Activated CD8-positive, alpha-beta T cell treated with anti-CD3 and anti-CD28 coated beads for 36 hours (primary cell): ENCODE measurements at regions of chr2 and their contacts with region 1.

Region 1: DNA sequence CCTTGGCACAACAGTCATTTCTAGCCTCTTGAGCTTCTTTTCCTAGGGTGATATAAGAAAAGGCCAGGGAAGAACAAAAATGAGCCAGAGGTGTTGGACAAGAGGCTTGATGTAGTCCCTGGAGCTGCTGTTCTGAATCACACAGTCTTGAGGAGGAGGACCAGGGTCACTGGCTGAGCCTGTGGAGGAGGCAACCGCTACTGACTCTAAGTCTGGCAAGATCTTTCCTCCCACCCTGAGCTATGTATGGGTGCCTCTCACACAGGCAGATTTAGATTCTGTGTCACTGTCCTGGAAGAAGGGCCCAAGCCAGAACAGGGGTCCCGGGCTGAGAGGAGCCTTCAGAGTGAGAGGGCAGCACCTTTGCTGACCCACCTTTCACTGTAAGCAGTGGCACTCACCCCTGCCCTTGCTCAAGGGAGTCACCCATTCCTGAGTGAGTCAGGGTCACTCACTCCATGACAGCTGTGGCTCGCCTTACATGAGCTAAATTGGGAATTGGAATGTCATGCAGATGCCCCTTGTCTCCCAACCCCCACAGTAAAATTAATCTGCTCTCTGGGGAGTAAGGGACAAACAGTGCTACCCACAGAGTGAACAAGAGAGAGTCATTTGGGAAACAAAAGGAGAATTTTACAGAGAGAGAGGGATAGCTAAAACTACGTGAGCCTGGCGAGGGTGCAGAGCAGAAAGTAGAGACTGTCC is at the start of gene TRIM54:
- DNase-seq: no peak
- ATAC-seq: no peak
- H3K4me3 Mint-ChIP-seq: no peak within 1 kb of the TSS
- H3K27ac Mint-ChIP-seq: no peak within 1 kb of the TSS
- H3K4me1 Mint-ChIP-seq: peaks cover 6% of the 10 kb centered on the region
- H3K27me3 Mint-ChIP-seq: peaks cover 8% of the 10 kb centered on the region
- CTCF ChIP-seq: no peak
- total RNA-seq, gene TRIM54: 0.16 to 0.23 TPM

Region 2: GRCh38 chr2:26846328-26847306 is 435.4 kb before region 1 on chr2:
- CTCF ChIA-PET with region 1: interaction called, 11 read pairs
- POLR2A ChIA-PET with region 1: no interaction called
- intact Hi-C with region 1: no loop called
- DNase-seq: peak; percentile 77
- ATAC-seq: peak; percentile 81
- H3K4me3 Mint-ChIP-seq: peak overlapping the region; percentile 35
- H3K27ac Mint-ChIP-seq: no peak overlapping the region
- H3K4me1 Mint-ChIP-seq: peaks cover 9% of the 10 kb centered on the region
- H3K27me3 Mint-ChIP-seq: peaks cover 46% of the 10 kb centered on the region
- CTCF ChIP-seq: peak; percentile 80

Region 3: DNA sequence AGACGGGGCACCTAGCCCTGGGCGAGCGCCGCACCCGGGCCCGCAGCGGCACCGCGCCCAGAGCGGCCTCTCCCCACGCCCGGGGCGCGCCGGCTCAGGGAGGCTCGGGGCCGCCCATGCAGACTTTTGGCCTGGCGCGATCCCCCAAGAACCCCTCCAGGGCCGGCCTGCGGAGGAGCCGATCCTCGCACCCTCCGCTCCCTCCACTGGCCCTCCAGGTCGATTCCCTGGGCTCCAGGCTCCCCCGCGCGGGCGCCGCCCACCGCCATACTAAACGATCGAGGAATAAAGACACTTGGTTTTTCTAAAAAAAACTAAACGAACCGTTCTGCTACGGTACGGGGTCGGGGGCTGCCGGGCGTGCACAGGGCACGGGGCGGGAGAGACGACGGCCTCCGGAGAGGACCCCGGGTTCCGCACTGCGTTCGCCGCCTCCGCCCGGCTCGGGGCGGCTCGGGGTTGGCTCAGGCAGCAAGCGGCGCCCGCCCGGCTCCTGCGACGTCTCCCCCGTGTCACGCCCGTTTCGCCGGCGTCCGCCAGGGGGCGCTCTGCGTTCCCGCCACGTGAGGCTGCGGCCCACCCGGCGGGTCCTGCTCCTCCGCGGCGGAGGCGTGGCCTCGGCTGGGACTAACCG is 195.8 kb before region 1 on chr2:
- CTCF ChIA-PET with region 1: interaction called, 10 read pairs
- POLR2A ChIA-PET with region 1: no interaction called
- intact Hi-C with region 1: no loop called
- DNase-seq: peak; percentile 96
- ATAC-seq: peak; percentile 90
- H3K4me3 Mint-ChIP-seq: peak overlapping the region; percentile 82
- H3K27ac Mint-ChIP-seq: peak overlapping the region; percentile 84
- H3K4me1 Mint-ChIP-seq: peaks cover 21% of the 10 kb centered on the region
- H3K27me3 Mint-ChIP-seq: no peaks in the 10 kb centered on the region
- CTCF ChIP-seq: peak; percentile 92

Region 4: DNA sequence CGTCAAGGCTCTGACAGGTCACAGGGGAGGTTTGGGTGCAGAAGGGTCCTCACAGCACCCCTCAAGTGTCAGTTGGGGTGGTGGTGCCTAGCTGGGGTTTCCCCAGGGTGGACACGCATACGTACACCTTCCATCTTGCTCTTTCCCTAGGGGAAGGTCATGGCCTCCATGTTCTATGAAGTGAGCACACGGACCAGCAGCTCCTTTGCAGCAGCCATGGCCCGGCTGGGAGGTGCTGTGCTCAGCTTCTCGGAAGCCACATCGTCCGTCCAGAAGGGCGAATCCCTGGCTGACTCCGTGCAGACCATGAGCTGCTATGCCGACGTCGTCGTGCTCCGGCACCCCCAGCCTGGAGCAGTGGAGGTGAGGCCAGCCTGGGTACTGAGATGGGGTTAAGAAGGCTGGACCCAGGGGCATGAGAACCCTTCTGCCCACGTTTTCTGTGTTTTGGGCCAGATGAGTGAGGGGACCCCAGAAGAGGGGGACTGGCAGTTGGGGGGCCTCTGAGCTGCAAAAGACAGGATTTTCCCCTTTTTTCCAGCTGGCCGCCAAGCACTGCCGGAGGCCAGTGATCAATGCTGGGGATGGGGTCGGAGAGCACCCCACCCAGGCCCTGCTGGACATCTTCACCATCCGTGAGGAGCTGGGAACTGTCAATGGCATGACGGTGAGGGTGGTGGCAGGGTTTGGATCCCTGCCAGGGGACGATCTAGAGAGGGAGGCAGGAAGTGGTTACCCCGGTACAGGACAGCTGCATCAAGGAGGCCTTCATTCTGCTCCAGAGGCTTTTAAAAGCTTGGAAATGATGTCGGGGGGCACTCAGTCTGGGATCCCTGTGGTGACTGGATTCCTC is 40.0 kb before region 1 on chr2:
- CTCF ChIA-PET with region 1: interaction called, 16 read pairs
- POLR2A ChIA-PET with region 1: interaction called, 3 read pairs
- intact Hi-C with region 1: no loop called
- DNase-seq: no peak
- ATAC-seq: no peak
- H3K4me3 Mint-ChIP-seq: no peak overlapping the region
- H3K27ac Mint-ChIP-seq: no peak overlapping the region
- H3K4me1 Mint-ChIP-seq: peaks cover 2% of the 10 kb centered on the region
- H3K27me3 Mint-ChIP-seq: no peaks in the 10 kb centered on the region
- CTCF ChIP-seq: no peak

Region 5: DNA sequence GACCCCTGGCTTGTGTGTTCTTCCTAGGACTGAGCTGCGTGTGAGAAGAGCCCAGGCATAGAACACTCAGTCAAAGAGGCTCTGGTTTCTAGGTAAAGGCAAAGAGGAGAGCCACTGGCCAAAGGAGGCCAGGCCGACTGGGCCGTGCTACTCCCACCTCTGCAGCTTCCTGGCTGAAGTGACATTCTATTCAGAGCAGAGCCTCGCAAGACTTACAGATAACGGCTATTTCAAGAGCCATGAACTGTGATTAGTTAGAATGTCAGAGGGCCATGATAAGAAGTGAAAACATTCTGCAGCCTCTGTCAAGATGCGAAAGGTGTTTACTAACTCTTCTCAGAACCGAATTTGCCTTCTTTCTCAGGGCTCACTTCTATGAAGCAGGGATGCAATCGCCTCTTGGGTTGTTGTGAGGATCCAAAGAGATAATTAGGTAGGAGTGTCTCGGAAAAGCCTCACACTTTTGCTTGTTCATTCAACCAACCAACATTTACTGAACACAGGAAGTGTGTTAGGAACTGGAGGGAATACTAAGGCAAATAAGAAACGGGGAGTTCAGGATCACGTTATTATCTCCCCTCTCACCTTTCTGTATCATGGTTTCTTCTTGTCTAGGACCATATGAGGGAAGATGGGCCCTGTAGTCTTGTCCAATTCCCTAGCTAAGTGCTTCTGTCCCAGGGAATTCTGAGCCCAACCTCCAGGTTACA is 10.2 kb before region 1 on chr2:
- CTCF ChIA-PET with region 1: interaction called, 76 read pairs
- POLR2A ChIA-PET with region 1: no interaction called
- intact Hi-C with region 1: no loop called
- DNase-seq: no peak
- ATAC-seq: no peak
- H3K4me3 Mint-ChIP-seq: no peak overlapping the region
- H3K27ac Mint-ChIP-seq: no peak overlapping the region
- H3K4me1 Mint-ChIP-seq: no peaks in the 10 kb centered on the region
- H3K27me3 Mint-ChIP-seq: peaks cover 4% of the 10 kb centered on the region
- CTCF ChIP-seq: no peak

Region 6: GRCh38 chr2:27347641-27348040 is 65.6 kb after region 1 on chr2:
- CTCF ChIA-PET with region 1: interaction called, 11 read pairs
- POLR2A ChIA-PET with region 1: interaction called, 4 read pairs
- intact Hi-C with region 1: no loop called
- DNase-seq: no peak
- ATAC-seq: no peak
- H3K4me3 Mint-ChIP-seq: no peak overlapping the region
- H3K27ac Mint-ChIP-seq: no peak overlapping the region
- H3K4me1 Mint-ChIP-seq: peaks cover 39% of the 10 kb centered on the region
- H3K27me3 Mint-ChIP-seq: no peaks in the 10 kb centered on the region
- CTCF ChIP-seq: no peak